A673 (cell line): ENCODE measurements at regions of chr1 and their contacts with region 1.

Region 1: DNA sequence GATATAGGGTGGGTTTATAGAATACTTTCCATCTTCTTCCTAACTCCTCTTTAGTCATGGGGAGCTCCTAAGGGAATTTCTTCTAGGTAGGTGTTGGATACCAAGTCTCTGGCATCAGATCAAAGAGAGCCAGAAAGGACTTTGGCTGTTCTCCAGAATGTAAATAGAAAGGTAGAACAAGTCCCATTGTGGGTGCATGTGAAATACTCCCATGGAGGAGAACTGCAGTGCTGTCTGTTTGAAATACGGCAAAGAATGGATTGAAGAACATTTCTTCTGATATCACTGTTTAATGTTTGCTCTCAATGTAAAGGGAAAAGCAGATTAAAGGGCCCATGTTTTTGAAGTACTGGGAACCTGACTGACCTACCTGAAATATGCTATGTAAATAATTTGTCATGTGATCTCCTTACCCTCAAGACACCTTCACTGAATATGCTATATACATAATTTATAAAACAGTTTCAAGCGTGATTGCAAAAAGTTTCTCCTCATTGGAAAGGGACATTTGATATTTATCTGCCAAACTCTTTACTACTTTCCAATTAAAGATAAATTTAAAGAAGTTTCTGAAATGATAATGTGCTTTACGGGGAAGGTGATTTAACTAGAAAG is 65.9 kb downstream of the LAMC1 start:
- DNase-seq: no peak
- H3K4me3 ChIP-seq: no peak overlapping the region
- H3K27ac ChIP-seq: no peak overlapping the region
- H3K4me1 ChIP-seq: peaks cover 36% of the 10 kb centered on the region
- H3K27me3 ChIP-seq: no peaks in the 10 kb centered on the region
- CTCF ChIP-seq: no peak

Region 2: GRCh38 chr1:183164350-183164749 is 75.2 kb after region 1 on chr1:
- CTCF ChIA-PET with region 1: no interaction called
- POLR2A ChIA-PET with region 1: interaction called, 14 read pairs
- intact Hi-C with region 1: no loop called
- DNase-seq: peak; percentile 47
- H3K4me3 ChIP-seq: no peak overlapping the region
- H3K27ac ChIP-seq: no peak overlapping the region
- H3K4me1 ChIP-seq: peaks cover 16% of the 10 kb centered on the region
- H3K27me3 ChIP-seq: no peaks in the 10 kb centered on the region
- CTCF ChIP-seq: no peak

Region 3: DNA sequence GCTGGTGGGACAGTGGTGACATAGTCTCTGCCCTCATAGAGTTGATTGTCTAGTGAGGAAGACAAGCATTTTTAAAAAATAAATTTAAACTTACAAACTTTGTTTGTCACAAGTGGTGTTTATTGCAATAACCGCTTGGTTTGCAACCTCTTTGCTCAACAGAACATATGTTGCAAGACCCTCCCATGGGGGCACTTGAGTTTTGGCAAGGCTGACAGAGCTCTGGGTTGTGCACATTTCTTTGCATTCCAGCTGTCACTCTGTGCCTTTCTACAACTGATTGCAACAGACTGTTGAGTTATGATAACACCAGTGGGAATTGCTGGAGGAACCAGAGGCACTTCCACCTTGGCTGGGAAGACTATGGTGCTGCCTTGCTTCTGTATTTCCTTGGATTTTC is 155.3 kb after region 1 on chr1:
- CTCF ChIA-PET with region 1: no interaction called
- POLR2A ChIA-PET with region 1: no interaction called
- intact Hi-C with region 1: no loop called
- DNase-seq: peak; percentile 88
- H3K4me3 ChIP-seq: no peak overlapping the region
- H3K27ac ChIP-seq: no peak overlapping the region
- H3K4me1 ChIP-seq: peaks cover 15% of the 10 kb centered on the region
- H3K27me3 ChIP-seq: no peaks in the 10 kb centered on the region
- CTCF ChIP-seq: no peak